Activated B cell treated with CpG ODN at 0.5 μM for 24 hours (primary cell): ENCODE measurements at regions of chr9 and their contacts with region 1.

Region 1: DNA sequence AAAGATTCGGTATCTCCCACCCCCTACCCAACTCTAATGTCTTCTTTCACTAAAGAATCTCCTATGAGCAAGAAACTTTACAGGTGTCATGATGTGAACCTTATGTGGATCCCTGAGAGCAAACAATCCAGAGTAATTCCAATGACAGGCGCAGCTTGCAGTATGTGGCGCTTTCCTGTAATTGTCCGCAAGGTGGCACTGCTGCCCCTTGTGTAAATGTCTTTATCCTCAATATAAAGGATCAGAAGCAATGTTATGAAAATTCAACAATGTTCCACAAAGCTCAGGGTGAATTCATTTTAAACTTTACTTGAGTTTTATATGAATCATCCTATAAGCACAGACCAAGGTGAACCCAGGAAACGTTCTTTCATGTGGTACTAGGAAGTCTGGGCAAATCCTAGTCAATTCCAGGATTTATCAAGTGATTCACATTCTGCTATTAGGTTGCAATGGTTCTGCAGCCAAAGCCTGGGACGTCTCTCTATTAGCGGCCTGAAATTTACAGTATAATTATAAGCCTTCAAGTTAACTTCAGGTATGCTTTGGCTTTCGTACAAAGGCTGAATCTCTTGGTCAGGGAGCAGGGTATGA is 113.7 kb downstream of the TRPM6 start:
- DNase-seq: peak; percentile 38
- ATAC-seq: peak; percentile 57
- H3K4me3 Mint-ChIP-seq: no peak overlapping the region
- H3K27ac Mint-ChIP-seq: no peak overlapping the region
- H3K4me1 Mint-ChIP-seq: no peaks in the 10 kb centered on the region
- H3K27me3 Mint-ChIP-seq: peaks cover 12% of the 10 kb centered on the region
- CTCF ChIP-seq: peak; percentile 32

Region 2: GRCh38 chr9:74172874-74173273 is 601.1 kb before region 1 on chr9:
- CTCF ChIA-PET with region 1: no interaction called
- POLR2A ChIA-PET with region 1: no interaction called
- intact Hi-C with region 1: no loop called
- DNase-seq: no peak
- ATAC-seq: no peak
- H3K4me3 Mint-ChIP-seq: no peak overlapping the region
- H3K27ac Mint-ChIP-seq: no peak overlapping the region
- H3K4me1 Mint-ChIP-seq: peaks cover 6% of the 10 kb centered on the region
- H3K27me3 Mint-ChIP-seq: no peaks in the 10 kb centered on the region
- CTCF ChIP-seq: no peak

Region 3: GRCh38 chr9:75001719-75002422 is 227.9 kb after region 1 on chr9:
- CTCF ChIA-PET with region 1: interaction called, 178 read pairs
- POLR2A ChIA-PET with region 1: no interaction called
- intact Hi-C with region 1: loop called (anchors 1 kb)
- DNase-seq: no peak
- ATAC-seq: peak; percentile 85
- H3K4me3 Mint-ChIP-seq: no peak overlapping the region
- H3K27ac Mint-ChIP-seq: no peak overlapping the region
- H3K4me1 Mint-ChIP-seq: peaks cover 9% of the 10 kb centered on the region
- H3K27me3 Mint-ChIP-seq: no peaks in the 10 kb centered on the region
- CTCF ChIP-seq: peak; percentile 40

Region 4: DNA sequence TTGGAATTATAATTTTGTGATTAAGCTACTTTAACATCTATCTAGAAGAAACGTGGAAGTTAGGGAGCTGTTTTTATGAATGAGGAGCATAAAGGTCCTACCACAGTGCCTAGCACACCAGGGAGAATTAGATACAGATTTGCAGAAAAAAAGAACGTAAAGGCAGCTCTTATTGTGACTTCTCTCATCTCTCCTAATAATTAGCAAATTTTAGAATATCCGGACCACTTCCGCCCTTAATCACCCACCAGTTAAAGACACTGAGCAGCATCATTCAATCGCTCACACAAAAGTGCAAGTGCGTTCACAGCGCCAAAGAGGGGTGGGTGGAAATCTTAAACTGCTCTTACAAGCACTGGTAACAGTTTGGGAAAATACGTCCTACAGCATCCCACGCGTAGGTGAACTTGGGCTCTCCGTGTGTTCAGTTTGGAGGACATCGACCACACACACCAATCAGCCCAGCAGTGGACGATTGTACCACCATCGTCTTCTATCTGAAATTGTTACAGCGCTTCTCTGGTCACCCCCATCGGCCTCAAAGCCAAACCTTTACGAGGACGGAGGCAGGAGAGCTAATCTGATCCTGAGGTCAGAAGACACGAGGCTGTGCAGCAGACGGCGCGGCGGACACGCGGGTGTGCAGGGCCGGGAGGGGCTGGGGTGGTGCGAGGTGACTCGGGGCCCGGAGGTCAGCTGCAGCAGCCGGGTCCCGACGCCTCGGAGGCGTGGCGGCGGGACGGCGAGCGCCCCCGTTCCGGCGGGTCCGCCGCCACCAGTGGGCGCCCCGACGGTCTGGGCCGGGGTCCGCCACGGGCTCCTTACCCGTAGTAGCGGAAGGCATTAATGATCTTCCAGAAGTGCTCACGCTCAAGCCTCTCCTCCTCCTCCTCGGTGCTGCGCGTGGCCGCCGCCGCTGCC is 253.5 kb after region 1 on chr9:
- CTCF ChIA-PET with region 1: interaction called, 12 read pairs
- POLR2A ChIA-PET with region 1: no interaction called
- intact Hi-C with region 1: no loop called
- DNase-seq: no peak
- ATAC-seq: peak; percentile 29
- H3K4me3 Mint-ChIP-seq: peak overlapping the region; percentile 96
- H3K27ac Mint-ChIP-seq: peak overlapping the region; percentile 95
- H3K4me1 Mint-ChIP-seq: peaks cover 36% of the 10 kb centered on the region
- H3K27me3 Mint-ChIP-seq: no peaks in the 10 kb centered on the region
- CTCF ChIP-seq: no peak

Region 5: GRCh38 chr9:75083188-75083970 is 309.4 kb after region 1 on chr9:
- CTCF ChIA-PET with region 1: interaction called, 97 read pairs
- POLR2A ChIA-PET with region 1: no interaction called
- intact Hi-C with region 1: no loop called
- DNase-seq: no peak
- ATAC-seq: no peak
- H3K4me3 Mint-ChIP-seq: no peak overlapping the region
- H3K27ac Mint-ChIP-seq: no peak overlapping the region
- H3K4me1 Mint-ChIP-seq: peaks cover 12% of the 10 kb centered on the region
- H3K27me3 Mint-ChIP-seq: no peaks in the 10 kb centered on the region
- CTCF ChIP-seq: no peak

Region 6: GRCh38 chr9:75200892-75201470 is 427.0 kb after region 1 on chr9:
- CTCF ChIA-PET with region 1: no interaction called
- POLR2A ChIA-PET with region 1: no interaction called
- intact Hi-C with region 1: loop called (anchors 1 kb)
- DNase-seq: no peak
- ATAC-seq: no peak
- H3K4me3 Mint-ChIP-seq: no peak overlapping the region
- H3K27ac Mint-ChIP-seq: no peak overlapping the region
- H3K4me1 Mint-ChIP-seq: no peaks in the 10 kb centered on the region
- H3K27me3 Mint-ChIP-seq: no peaks in the 10 kb centered on the region
- CTCF ChIP-seq: peak; percentile 46

Region 7: GRCh38 chr9:75866273-75866871 is 1092.4 kb after region 1 on chr9:
- CTCF ChIA-PET with region 1: no interaction called
- POLR2A ChIA-PET with region 1: no interaction called
- intact Hi-C with region 1: loop called (anchors 2 kb)
- DNase-seq: no peak
- ATAC-seq: no peak
- H3K4me3 Mint-ChIP-seq: no peak overlapping the region
- H3K27ac Mint-ChIP-seq: no peak overlapping the region
- H3K4me1 Mint-ChIP-seq: no peaks in the 10 kb centered on the region
- H3K27me3 Mint-ChIP-seq: peaks cover 7% of the 10 kb centered on the region
- CTCF ChIP-seq: peak; percentile 36